ENCODE measurements at regions of chr14 and their contacts with region 1.

Region 1: GRCh38 chr14:64438181-64438841 is 27.0 kb upstream of the AKAP5 start:
- DNase-seq: peak in 1 of 2 donors; percentile 53
- ATAC-seq: peak; percentile 63
- H3K4me3 ChIP-seq: no peak overlapping the region
- H3K27ac ChIP-seq: peak overlapping the region; percentile 62 to 97
- H3K4me1 ChIP-seq: peaks cover 0 to 3% of the 10 kb centered on the region in 2 donors
- H3K27me3 ChIP-seq: no peaks in the 10 kb centered on the region

Region 2: DNA sequence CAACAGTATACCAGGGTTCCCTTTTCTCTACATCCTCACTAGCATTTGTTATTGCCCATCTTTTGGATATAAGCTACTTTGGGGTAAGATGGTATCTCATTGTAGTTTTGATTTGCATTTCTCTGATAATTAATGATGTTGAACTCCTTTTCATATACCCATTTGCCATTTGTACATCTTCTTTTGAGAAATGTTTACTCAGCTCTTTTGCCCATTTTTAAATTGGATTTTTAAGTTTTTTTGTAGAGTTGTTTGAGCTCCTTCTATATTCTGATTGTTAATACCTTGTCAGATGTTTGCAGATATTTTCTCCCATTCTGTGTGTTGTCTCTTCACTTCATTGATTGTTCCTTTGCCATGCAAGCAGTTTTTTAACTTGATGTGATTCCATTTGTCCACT is 166.3 kb before region 1 on chr14:
- intact Hi-C with region 1: no loop called
- DNase-seq: no peak
- ATAC-seq: no peak
- H3K4me3 ChIP-seq: no peak overlapping the region
- H3K27ac ChIP-seq: no peak overlapping the region
- H3K4me1 ChIP-seq: no peaks in the 10 kb centered on the region
- H3K27me3 ChIP-seq: no peaks in the 10 kb centered on the region

Region 3: DNA sequence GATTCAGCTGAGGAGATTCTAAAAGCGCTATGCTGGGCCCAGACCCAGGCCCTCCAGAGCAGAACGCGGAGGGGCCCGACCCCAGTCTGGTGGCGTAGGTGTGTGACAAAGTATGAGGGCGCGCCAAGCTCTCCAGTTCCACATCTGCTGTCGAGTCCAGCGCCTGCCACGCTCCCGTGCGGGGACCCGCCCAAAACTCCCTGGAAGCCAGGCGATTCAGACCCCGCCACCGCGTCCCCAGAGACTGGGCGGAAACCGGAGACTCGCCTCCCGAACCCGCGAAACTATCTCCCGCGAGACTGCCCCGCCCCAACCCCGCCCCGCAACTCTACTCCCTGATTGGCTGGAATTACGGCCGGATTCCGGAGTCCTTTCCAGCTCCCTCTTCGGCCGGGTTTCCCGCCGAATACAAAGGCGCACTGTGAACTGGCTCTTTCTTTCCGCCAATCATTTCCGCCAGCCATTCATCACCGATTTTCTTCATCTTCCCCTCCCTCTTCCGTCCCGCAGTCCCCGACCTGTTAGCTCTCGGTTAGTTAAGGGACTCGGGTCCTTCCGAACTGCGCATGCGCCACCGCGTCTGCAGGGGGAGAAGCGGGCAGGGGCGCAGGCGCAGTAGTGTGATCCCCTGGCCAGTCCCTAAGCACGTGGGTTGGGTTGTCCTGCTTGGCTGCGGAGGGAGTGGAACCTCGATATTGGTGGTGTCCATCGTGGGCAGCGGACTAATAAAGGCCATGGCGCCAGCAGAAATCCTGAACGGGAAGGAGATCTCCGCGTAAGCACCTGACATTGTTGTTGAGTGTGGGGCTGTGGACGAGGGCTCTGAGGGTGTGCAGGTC is 50.4 kb before region 1 on chr14 and contains the start of gene MTHFD1:
- intact Hi-C with region 1: no loop called
- DNase-seq: peak; percentile 100
- ATAC-seq: peak; percentile 96
- H3K4me3 ChIP-seq: peak within 1 kb of the TSS; percentile 36 to 74
- H3K27ac ChIP-seq: peak within 1 kb of the TSS; percentile 47 to 54
- H3K4me1 ChIP-seq: no peaks in the 10 kb centered on the region
- H3K27me3 ChIP-seq: no peaks in the 10 kb centered on the region
- total RNA-seq, gene MTHFD1: 39.4 to 44.6 TPM

Region 4: GRCh38 chr14:64465191-64465822 is 27.0 kb after region 1 on chr14 and contains the start of gene AKAP5:
- intact Hi-C with region 1: loop called in 1 of 2 experiments (anchors 1 kb)
- DNase-seq: peak; percentile 55 to 87
- ATAC-seq: peak; percentile 79
- H3K4me3 ChIP-seq: peak within 1 kb of the TSS; percentile 93 to 96
- H3K27ac ChIP-seq: peak within 1 kb of the TSS; percentile 67 to 78
- H3K4me1 ChIP-seq: peaks cover 0 to 1% of the 10 kb centered on the region in 2 donors
- H3K27me3 ChIP-seq: no peaks in the 10 kb centered on the region
- total RNA-seq, gene AKAP5: 2.8 to 2.9 TPM

Region 5: GRCh38 chr14:64478634-64479250 is 40.4 kb after region 1 on chr14:
- intact Hi-C with region 1: loop called in 1 of 2 experiments (anchors 5 kb)
- DNase-seq: no peak
- ATAC-seq: peak; percentile 50
- H3K4me3 ChIP-seq: no peak overlapping the region
- H3K27ac ChIP-seq: no peak overlapping the region
- H3K4me1 ChIP-seq: no peaks in the 10 kb centered on the region
- H3K27me3 ChIP-seq: no peaks in the 10 kb centered on the region

Region 6: DNA sequence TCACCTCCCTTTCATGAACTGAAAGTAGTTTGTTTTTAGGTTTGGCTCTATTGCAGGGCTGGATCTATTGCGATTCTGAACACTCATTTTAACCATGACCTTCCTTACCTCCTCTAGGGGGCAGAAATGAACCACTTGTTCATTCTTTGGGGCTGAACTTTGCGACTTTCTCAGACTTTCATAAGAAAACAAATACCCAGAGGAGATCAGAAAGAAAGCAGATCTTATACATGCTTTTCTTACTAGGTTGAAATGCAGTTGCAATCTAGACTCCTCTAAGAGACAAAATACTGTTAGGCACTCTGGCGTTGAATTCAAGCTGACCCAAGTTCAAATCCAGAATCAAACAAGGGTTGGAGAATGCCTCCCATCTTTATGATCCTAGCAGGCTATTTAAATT is 233.3 kb after region 1 on chr14:
- intact Hi-C with region 1: no loop called
- DNase-seq: no peak
- ATAC-seq: peak; percentile 84
- H3K4me3 ChIP-seq: no peak overlapping the region
- H3K27ac ChIP-seq: no peak overlapping the region
- H3K4me1 ChIP-seq: no peaks in the 10 kb centered on the region
- H3K27me3 ChIP-seq: no peaks in the 10 kb centered on the region

Region 7: GRCh38 chr14:65070455-65070976 is 632.2 kb after region 1 on chr14:
- intact Hi-C with region 1: no loop called
- DNase-seq: no peak
- ATAC-seq: no peak
- H3K4me3 ChIP-seq: no peak overlapping the region
- H3K27ac ChIP-seq: no peak overlapping the region
- H3K4me1 ChIP-seq: peaks cover 0 to 2% of the 10 kb centered on the region in 2 donors
- H3K27me3 ChIP-seq: no peaks in the 10 kb centered on the region